ENCODE measurements at regions of chr5 and their contacts with region 1.

Region 1: GRCh38 chr5:81851481-81852178 is 100.7 kb upstream of the SSBP2 start:
- DNase-seq: peak; percentile 81 to 94
- H3K4me3 ChIP-seq: peak overlapping the region; percentile 52
- H3K27ac ChIP-seq: peak overlapping the region; percentile 76
- H3K4me1 ChIP-seq: peaks cover 38% of the 10 kb centered on the region
- H3K27me3 ChIP-seq: no peaks in the 10 kb centered on the region
- CTCF ChIP-seq: no peak

Region 2: GRCh38 chr5:81425569-81425968 is 426.1 kb before region 1 on chr5:
- CTCF ChIA-PET with region 1: no interaction called
- POLR2A ChIA-PET with region 1: no interaction called
- intact Hi-C with region 1: loop called (anchors 2 kb)
- DNase-seq: peak; percentile 2 to 55
- H3K4me3 ChIP-seq: no peak overlapping the region
- H3K27ac ChIP-seq: no peak overlapping the region
- H3K4me1 ChIP-seq: peaks cover 35% of the 10 kb centered on the region
- H3K27me3 ChIP-seq: no peaks in the 10 kb centered on the region
- CTCF ChIP-seq: peak; percentile 83

Region 3: DNA sequence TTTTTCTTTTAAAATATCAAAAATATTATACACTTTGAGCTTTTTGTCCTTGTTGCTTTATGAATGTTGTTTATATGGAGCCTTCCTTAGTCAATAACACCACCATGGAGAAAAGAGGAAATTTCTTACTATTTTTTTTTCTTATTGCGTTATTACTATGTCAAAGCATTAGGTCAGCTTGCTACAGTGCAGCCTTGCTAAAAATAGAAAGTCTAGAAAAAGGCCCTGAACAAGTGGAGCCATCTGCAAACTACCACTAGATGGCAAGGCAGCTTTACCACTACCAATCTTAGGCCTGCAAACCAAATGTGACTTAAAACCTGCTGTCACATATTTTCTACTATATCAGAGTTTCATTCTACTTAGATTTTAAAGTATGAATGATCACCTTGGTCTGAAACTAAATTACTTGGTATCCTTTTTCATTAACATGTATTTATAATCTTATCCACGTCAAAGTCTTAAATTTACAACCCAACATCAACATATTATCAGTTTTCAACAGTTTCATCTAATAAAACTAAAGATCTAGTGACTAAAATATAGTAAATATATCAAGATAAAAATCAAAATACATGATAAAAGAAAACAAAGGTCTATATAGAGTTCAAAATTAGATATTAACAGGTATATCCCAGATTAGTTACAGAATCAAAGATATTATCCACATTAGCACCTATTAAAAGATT is 344.6 kb before region 1 on chr5:
- CTCF ChIA-PET with region 1: no interaction called
- POLR2A ChIA-PET with region 1: no interaction called
- intact Hi-C with region 1: loop called (anchors 1 kb)
- DNase-seq: peak; percentile 25 to 67
- H3K4me3 ChIP-seq: no peak overlapping the region
- H3K27ac ChIP-seq: no peak overlapping the region
- H3K4me1 ChIP-seq: no peaks in the 10 kb centered on the region
- H3K27me3 ChIP-seq: no peaks in the 10 kb centered on the region
- CTCF ChIP-seq: peak; percentile 85

Region 4: DNA sequence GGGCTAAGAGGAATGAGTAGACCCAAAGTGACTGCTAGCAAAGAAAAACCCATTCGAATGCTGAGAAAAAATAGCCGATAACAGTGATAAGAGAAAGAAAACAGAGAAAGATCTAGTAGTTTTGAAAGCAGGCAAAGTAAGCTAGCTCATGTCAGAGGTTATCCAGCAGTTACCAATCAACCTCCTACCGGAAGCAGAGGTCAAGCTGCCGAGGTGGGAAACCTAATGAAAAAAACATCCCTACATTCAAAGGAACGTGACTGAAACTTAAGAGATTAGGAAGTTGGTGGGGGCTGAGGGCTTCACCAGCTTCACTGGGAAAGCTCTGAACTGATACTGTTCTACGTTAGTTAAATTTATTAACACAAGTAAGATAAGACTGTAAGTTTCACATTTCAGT is 133.3 kb before region 1 on chr5:
- CTCF ChIA-PET with region 1: no interaction called
- POLR2A ChIA-PET with region 1: no interaction called
- intact Hi-C with region 1: no loop called
- DNase-seq: no peak
- H3K4me3 ChIP-seq: no peak overlapping the region
- H3K27ac ChIP-seq: no peak overlapping the region
- H3K4me1 ChIP-seq: no peaks in the 10 kb centered on the region
- H3K27me3 ChIP-seq: no peaks in the 10 kb centered on the region
- CTCF ChIP-seq: no peak

Region 5: GRCh38 chr5:81787474-81788242 is 64.0 kb before region 1 on chr5:
- CTCF ChIA-PET with region 1: interaction called, 3 read pairs
- POLR2A ChIA-PET with region 1: interaction called, 9 read pairs
- intact Hi-C with region 1: loop called (anchors 1 kb)
- DNase-seq: peak; percentile 43 to 83
- H3K4me3 ChIP-seq: no peak overlapping the region
- H3K27ac ChIP-seq: peak overlapping the region; percentile 81
- H3K4me1 ChIP-seq: peaks cover 24% of the 10 kb centered on the region
- H3K27me3 ChIP-seq: no peaks in the 10 kb centered on the region
- CTCF ChIP-seq: no peak

Region 6: DNA sequence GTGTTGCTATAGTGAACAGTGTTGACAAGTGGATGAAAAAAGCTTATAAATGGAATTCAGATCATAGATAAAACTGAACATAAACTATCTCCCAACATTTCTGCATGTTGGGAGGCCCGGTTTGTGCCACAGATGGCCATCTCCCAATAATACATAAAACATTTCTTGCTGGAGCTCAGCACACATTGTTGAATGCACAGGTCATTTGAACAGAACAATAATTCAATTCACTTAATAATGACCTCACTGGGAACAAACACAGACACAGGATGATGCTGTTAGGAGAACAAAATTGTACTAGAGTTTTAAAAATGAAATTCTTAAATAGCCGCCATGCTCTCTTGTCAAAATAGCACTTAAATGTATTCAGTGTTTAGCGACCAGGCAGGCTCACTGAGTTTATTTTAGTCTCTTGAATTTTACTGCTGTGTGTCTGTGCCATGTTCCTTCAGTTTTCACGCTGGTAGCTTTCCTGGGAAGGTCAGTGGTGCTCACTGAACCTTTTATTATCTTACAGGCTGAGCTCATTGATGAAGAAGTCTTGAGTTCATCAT is 15.7 kb before region 1 on chr5:
- CTCF ChIA-PET with region 1: no interaction called
- POLR2A ChIA-PET with region 1: no interaction called
- intact Hi-C with region 1: no loop called
- DNase-seq: no peak
- H3K4me3 ChIP-seq: no peak overlapping the region
- H3K27ac ChIP-seq: no peak overlapping the region
- H3K4me1 ChIP-seq: no peaks in the 10 kb centered on the region
- H3K27me3 ChIP-seq: no peaks in the 10 kb centered on the region
- CTCF ChIP-seq: no peak

Region 7: DNA sequence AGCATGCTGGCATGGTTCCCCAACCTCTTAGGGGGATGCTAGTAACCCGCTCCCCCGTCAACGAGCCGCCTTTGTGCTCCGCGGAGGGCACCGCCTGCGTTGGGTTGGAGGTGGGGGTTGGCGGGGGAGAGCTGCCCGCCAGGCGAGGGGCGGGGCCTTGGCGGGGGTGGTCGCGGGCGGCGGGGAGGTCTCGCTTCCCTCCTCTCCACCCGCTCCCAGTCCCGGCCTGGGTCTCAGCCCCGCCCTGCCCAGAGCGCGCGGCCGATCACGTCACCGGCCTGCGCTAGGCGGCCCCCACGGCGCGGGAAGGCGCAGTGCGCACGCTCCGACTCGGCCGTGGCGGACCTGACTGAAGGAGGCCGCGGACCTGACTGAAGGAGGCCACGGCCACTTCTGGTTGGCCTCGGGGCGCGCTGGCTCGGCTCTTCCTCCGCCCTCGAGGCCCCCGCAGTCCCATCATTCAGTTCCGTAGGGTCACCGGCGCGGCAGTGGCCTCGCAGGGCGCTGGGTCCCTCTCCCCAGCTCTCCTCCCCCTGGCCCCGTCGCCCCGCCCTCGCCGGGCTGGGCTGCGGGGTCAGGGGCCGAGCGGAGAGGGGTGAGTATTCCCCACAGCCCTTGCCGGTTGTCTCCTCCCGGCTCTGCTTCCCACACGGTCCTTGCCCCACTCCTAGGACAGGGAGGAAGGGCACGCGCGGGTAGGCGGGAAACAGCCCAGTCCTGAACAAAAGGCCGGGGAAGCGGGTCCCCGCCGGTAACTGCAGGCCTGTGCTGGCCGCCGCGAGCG is 120.3 kb after region 1 on chr5 and contains the start of gene ATG10:
- CTCF ChIA-PET with region 1: interaction called, 3 read pairs
- POLR2A ChIA-PET with region 1: no interaction called
- intact Hi-C with region 1: loop called (anchors 1 kb)
- DNase-seq: peak; percentile 66 to 91
- H3K4me3 ChIP-seq: peak within 1 kb of the TSS; percentile 64
- H3K27ac ChIP-seq: peak within 1 kb of the TSS; percentile 87
- H3K4me1 ChIP-seq: peaks cover 15% of the 10 kb centered on the region
- H3K27me3 ChIP-seq: no peaks in the 10 kb centered on the region
- CTCF ChIP-seq: no peak
- total RNA-seq, gene ATG10: 12.7 and 15.7 TPM in 2 replicates

Region 8: DNA sequence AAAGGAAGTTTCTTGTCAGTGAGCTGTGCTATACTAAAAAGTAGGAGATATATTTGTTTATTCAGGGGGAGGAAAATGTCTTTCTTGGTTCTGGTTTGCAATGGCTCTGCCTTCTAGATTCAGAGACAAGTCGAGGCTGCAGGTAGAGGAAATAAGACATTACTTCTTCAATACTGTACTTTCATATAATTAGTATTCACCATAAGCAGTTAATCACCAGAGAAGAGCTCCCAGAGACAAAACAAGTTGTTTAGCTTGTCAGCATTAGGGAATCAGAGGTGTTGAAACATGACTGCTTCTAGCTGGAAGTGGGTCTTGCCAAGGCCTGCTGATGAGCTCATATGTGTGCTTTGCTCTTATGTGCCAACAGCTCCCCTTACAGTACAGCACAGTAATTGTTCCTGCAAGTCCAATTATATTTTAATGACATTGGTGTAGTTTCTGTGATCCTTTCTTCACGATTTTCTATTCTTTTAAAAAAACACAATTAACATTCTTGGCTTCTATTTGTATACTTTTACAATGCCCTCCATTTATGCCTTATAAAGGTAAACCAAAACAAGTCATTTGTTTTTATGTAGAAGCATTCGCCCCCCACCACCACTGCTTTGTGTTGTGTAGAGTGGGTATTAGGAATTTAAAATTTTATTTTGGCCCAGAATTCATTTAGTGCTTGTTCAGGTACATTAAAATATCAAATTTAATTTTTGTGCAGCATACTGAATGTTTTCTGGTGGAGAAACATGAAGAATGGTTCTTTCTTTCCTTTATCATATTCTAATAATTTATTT is 314.3 kb after region 1 on chr5:
- CTCF ChIA-PET with region 1: interaction called, 8 read pairs
- POLR2A ChIA-PET with region 1: no interaction called
- intact Hi-C with region 1: loop called (anchors 1 kb)
- DNase-seq: peak; percentile 28 to 79
- H3K4me3 ChIP-seq: no peak overlapping the region
- H3K27ac ChIP-seq: no peak overlapping the region
- H3K4me1 ChIP-seq: peaks cover 7% of the 10 kb centered on the region; the same call in 1 of the 2 replicates
- H3K27me3 ChIP-seq: no peaks in the 10 kb centered on the region
- CTCF ChIP-seq: peak; percentile 83

Region 9: GRCh38 chr5:82225525-82226172 is 374.0 kb after region 1 on chr5:
- CTCF ChIA-PET with region 1: no interaction called
- POLR2A ChIA-PET with region 1: no interaction called
- intact Hi-C with region 1: loop called (anchors 1 kb)
- DNase-seq: peak in 1 of 2 experiments; percentile 49
- H3K4me3 ChIP-seq: no peak overlapping the region
- H3K27ac ChIP-seq: no peak overlapping the region
- H3K4me1 ChIP-seq: no peaks in the 10 kb centered on the region
- H3K27me3 ChIP-seq: no peaks in the 10 kb centered on the region
- CTCF ChIP-seq: peak; percentile 88

Measured in PC-9 (cell line).